Activated CD4-positive, alpha-beta T cell treated with anti-CD3 and anti-CD28 coated beads, Interleukin-2, amount 10 ng/mL, durations not matched to agents 24 days and 14 days (primary cell): ENCODE measurements at regions of chr5 and their contacts with region 1.

Region 1: DNA sequence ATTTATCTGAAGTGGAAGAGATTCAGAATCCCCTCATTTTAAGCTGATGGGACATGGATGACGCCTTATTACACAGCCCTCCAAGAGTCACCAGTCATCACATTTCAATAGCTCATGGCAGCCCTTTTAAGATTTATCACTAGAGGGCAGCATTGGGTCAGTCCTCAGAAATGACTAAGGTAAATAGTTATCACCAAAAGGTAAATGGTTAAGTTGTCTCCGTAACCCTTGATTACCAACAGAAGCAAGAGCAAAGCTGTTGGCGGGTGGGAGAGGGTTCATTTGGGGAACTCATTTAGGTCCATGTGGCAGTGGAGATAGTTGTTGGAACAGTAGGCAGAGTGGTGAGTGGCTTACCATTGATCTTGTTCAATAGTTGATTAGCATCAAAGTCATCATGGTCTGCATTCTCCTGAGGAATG is 12.0 kb upstream of the C9 start:
- DNase-seq: peak; percentile 82
- H3K4me3 Mint-ChIP-seq: no peak overlapping the region
- H3K27ac Mint-ChIP-seq: no peak overlapping the region
- H3K4me1 Mint-ChIP-seq: no peaks in the 10 kb centered on the region
- H3K27me3 Mint-ChIP-seq: peaks cover 20% of the 10 kb centered on the region

Region 2: GRCh38 chr5:39158127-39158593 is 218.1 kb before region 1 on chr5:
- intact Hi-C with region 1: no loop called
- DNase-seq: peak; percentile 54
- H3K4me3 Mint-ChIP-seq: no peak overlapping the region
- H3K27ac Mint-ChIP-seq: peak overlapping the region; percentile 62
- H3K4me1 Mint-ChIP-seq: peaks cover 57% of the 10 kb centered on the region
- H3K27me3 Mint-ChIP-seq: no peaks in the 10 kb centered on the region

Region 3: DNA sequence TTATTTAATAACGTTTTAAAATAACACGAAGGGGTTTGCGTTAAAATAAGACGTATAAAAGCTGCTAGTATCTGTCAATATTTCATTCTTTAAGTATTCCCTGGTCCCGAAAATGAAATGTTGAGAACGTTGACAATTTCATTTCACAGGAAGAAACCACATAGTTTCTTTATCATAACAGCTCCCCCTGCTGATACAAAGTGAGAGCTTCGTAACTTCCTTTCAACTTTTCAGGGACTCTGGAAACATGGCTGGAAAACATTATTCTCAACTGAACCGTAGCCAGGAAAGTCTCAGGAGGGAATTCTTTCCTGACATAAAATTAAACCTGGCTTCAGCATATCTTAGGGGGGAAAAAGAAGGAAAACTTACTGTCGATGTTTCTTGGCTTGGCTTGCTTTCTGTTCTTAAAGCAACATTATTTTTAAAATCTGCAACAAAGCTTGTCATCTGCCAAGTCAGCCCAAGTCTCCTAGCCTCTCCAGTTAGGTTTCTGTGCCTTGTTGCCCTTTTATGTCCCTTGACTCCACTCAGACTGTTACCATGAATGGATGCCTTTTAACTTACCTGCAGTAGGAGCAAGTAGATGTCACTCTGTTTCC is 171.3 kb after region 1 on chr5:
- intact Hi-C with region 1: loop called (anchors 1 kb)
- DNase-seq: peak; percentile 73
- H3K4me3 Mint-ChIP-seq: no peak overlapping the region
- H3K27ac Mint-ChIP-seq: no peak overlapping the region
- H3K4me1 Mint-ChIP-seq: peaks cover 2% of the 10 kb centered on the region
- H3K27me3 Mint-ChIP-seq: peaks cover 17% of the 10 kb centered on the region

Region 4: DNA sequence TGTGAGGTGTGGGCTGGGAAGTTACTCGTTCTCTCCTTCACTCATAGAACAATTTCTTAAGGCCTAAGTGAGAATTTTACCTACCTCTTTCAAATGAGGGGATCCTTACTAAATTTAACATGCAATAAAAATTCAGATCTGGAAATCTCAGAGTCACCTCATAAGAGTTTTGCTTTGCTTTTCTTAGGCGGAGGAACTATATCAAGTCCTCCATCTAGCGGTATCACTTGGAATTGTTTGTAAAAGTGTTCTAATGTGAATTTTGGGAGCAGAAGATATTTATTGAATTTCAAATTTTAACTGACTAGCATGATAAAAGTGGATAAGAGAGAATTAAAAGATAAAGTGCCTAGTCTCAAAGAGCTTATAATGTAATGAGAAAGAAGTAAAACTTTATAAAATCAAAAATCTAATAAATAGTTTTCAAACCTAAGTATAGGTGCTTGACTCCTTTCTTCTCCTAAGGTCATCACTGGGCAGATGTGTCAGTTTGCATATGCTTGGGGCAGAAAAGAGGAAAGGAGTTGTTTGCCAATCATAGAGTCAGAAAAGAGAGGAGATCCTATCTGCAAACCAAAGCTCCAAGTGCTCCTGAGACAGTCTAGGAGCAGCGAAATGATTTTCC is 194.2 kb after region 1 on chr5:
- intact Hi-C with region 1: loop called (anchors 1 kb)
- DNase-seq: no peak
- H3K4me3 Mint-ChIP-seq: no peak overlapping the region
- H3K27ac Mint-ChIP-seq: no peak overlapping the region
- H3K4me1 Mint-ChIP-seq: no peaks in the 10 kb centered on the region
- H3K27me3 Mint-ChIP-seq: peaks cover 21% of the 10 kb centered on the region